AG04450 (cell line): ENCODE measurements at regions of chr16 and their contacts with region 1.

Region 1: GRCh38 chr16:15822957-15823356 is 33.9 kb downstream of the MYH11 start:
- DNase-seq: no peak
- H3K4me3 ChIP-seq: no peak overlapping the region
- H3K27ac ChIP-seq: no peak overlapping the region
- H3K27me3 ChIP-seq: peaks cover 23% of the 10 kb centered on the region
- CTCF ChIP-seq: no peak

Region 2: GRCh38 chr16:15564604-15565339 is 258.2 kb before region 1 on chr16:
- CTCF ChIA-PET with region 1: no interaction called
- POLR2A ChIA-PET with region 1: no interaction called
- DNase-seq: no peak
- H3K4me3 ChIP-seq: no peak overlapping the region
- H3K27ac ChIP-seq: no peak overlapping the region
- H3K27me3 ChIP-seq: no peaks in the 10 kb centered on the region
- CTCF ChIP-seq: no peak

Region 3: DNA sequence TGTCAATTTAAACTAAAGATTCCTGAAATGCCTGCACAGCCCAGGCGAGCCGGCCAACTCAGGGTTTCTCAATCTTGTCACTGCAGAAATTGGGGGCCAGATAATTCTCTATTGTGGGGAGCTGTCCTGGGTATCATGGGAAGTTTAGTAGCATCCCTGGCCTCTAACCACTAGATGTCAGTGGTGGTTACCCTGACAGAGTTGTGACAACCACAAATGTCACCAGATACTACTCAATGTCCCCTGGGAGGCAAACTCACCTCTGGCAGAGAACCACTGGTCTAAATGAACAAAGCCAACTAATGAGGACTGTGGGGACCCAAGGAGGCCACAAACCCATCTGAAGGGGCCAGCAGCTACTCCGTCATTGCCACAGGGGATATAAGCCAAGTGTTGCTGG is 57.1 kb before region 1 on chr16:
- CTCF ChIA-PET with region 1: interaction called, 10 read pairs
- POLR2A ChIA-PET with region 1: no interaction called
- DNase-seq: no peak
- H3K4me3 ChIP-seq: no peak overlapping the region
- H3K27ac ChIP-seq: no peak overlapping the region
- H3K27me3 ChIP-seq: peaks cover 10% of the 10 kb centered on the region
- CTCF ChIP-seq: peak; percentile 81

Region 4: GRCh38 chr16:15811481-15812400 is 11.2 kb before region 1 on chr16:
- CTCF ChIA-PET with region 1: interaction called, 24 read pairs
- POLR2A ChIA-PET with region 1: no interaction called
- DNase-seq: peak; percentile 77
- H3K4me3 ChIP-seq: no peak overlapping the region
- H3K27ac ChIP-seq: no peak overlapping the region
- H3K27me3 ChIP-seq: peaks cover 18% of the 10 kb centered on the region
- CTCF ChIP-seq: peak; percentile 25; the same call in 1 of the 2 replicates